IMR-90 (cell line): ENCODE measurements at regions of chr7 and their contacts with region 1.

Region 1: GRCh38 chr7:14858866-14859265 is 43.7 kb downstream of the DGKB start:
- DNase-seq: no peak
- ATAC-seq: no peak
- H3K4me3 ChIP-seq: no peak overlapping the region
- H3K27ac ChIP-seq: no peak overlapping the region
- H3K4me1 ChIP-seq: no peaks in the 10 kb centered on the region
- H3K27me3 ChIP-seq: no peaks in the 10 kb centered on the region
- CTCF ChIP-seq: no peak
- POLR2A ChIP-seq: no peak
- RAD21 ChIP-seq: no peak

Region 2: DNA sequence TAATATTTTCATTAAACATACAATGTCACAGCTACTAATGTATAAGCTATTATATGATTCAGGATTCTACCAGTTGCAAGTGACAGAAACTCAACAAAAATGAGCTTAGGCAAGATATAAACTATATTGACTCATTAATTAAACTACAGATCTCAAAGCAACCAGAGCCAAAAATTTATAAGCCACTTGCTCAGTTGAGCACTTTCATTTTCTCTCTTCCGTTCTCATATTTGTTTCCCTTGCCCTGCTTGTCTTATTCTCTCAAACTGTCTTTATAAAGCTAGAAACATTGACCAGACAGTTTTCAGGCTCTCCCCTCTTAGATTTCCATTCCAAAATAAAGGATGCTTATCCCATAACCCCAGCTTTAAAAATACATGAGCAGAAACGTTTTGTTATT is 103.9 kb after region 1 on chr7:
- CTCF ChIA-PET with region 1: no interaction called
- POLR2A ChIA-PET with region 1: no interaction called
- dilution Hi-C with region 1: no loop called
- in situ Hi-C with region 1: no loop called
- intact Hi-C with region 1: no loop called
- DNase-seq: no peak
- ATAC-seq: no peak
- H3K4me3 ChIP-seq: no peak overlapping the region
- H3K27ac ChIP-seq: no peak overlapping the region
- H3K4me1 ChIP-seq: no peaks in the 10 kb centered on the region
- H3K27me3 ChIP-seq: no peaks in the 10 kb centered on the region
- CTCF ChIP-seq: no peak
- POLR2A ChIP-seq: no peak
- RAD21 ChIP-seq: no peak

Region 3: DNA sequence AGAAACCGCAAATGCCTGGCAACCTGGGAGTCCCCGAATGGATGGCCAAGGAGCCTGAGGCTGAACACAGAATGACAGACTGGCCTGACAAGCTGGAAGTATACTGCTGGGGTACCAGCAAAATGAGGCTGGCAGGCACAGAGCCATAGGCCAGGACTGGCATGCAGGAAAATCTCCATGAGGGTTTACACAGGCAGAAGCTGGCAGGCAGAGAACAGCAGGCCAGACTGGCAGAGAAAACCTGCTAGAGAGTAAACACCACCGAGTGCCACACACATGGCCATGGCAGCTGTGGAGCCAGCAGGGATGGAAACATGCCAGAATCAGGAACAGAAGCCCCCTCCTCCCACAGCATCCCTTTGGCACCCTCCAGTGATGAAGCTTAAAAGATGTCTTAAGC is 1499.1 kb after region 1 on chr7:
- CTCF ChIA-PET with region 1: no interaction called
- POLR2A ChIA-PET with region 1: no interaction called
- dilution Hi-C with region 1: no loop called
- in situ Hi-C with region 1: no loop called
- intact Hi-C with region 1: loop called (anchors 5 kb)
- DNase-seq: no peak
- ATAC-seq: no peak
- H3K4me3 ChIP-seq: no peak overlapping the region
- H3K27ac ChIP-seq: no peak overlapping the region
- H3K4me1 ChIP-seq: no peaks in the 10 kb centered on the region
- H3K27me3 ChIP-seq: no peaks in the 10 kb centered on the region
- CTCF ChIP-seq: no peak
- POLR2A ChIP-seq: no peak
- RAD21 ChIP-seq: no peak